AG04449 (cell line): ENCODE measurements at regions of chr3 and their contacts with region 1.

Region 1: DNA sequence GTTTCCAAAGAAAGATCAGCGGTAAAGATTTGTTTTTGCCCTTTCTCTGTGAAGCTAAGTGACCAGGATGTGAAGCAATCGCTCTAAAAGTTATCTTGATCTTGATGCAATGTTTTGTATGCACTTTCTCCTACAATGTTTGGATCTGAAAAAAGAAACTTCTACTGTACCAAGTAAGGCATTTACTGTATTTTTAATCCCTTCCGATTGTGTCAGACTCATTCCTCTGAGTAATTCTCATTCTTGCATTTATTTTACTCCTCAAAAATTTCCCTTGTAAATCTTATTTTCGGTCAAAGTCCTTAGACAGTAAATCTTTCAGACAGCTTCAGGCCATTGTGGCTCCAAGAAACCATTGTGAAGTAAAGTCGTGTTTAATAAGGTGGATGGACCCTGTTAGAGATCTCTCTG is 141.9 kb downstream of the TP63 start:
- DNase-seq: peak; percentile 66
- H3K4me3 ChIP-seq: peak overlapping the region; percentile 9; the same call in 1 of the 2 replicates
- CTCF ChIP-seq: no peak

Region 2: DNA sequence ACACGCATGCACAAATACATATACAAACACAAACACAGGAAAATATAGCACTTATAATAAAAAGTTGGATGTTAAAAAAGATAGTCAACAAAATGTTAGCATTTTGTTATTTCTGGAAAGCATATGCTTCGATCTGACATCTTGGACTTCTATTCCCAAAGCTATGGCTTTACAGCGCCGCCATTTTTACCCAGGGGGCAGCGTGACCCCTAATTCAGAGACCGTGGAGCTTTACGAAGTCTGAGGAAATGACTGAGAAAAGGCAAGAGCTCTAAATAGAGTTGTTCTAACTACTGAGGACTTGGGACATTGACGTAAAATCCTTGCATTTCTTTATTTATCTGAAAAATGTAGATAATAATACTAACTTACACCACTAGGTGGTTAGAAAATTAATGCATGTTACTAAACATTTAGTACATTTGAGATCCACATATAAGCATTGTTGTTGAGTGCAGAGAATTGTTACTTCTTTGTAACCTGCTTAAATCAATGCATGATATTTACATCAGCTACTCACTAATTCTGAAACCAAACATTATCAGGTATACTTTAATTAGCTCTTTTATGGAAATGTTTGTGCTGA is 13.5 kb after region 1 on chr3:
- CTCF ChIA-PET with region 1: interaction called, 13 read pairs
- POLR2A ChIA-PET with region 1: interaction called, 3 read pairs
- DNase-seq: no peak
- H3K4me3 ChIP-seq: no peak overlapping the region
- CTCF ChIP-seq: no peak